Dorsolateral prefrontal cortex (tissue), 120 donors: ENCODE measurements at regions of chr15 and their contacts with region 1.

Region 1: DNA sequence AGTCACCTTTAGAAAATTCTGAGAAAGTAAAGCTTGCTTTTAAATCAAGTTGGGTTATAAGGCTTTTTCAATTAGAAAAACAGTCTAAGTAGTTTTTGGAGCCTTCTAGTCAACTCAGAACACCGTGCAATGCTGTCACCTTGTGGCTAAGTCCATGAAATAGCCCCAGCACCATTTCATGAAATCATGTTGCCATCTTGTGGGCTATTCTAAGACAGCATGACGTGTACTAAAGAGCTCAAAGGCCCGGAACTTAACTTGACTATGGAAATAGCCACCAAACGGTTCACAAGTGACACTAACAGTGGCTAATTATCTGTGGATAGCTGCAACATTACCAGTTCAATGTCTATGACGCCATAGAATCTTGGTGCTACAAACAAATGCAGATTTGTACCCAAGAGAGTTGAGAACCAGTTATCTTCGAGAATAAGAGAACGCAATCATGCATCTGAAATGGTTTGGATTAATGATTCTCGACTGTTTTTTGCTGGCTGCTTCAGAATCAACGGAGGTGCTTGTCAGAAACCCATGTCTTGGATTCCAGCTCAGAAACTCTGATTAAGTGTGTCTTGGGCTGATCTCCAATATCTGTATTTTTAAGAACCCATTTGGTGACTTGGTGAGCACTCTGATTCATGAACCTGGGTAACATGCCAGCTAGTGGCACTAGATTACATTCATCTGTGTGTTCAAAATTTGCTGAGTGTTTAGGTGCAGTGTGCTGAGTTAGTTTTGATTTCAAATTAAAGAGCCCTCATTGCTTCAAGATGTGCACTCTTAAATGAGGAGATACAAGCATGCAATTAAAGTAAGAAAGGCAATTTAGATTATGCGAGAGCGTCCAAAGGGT is 111.2 kb upstream of the MCTP2 start:
- DNase-seq: peak in 8 of 10 donors; percentile 20 to 74 (median 49)
- H3K4me3 ChIP-seq: no peak overlapping the region
- H3K27ac ChIP-seq: no peak overlapping the region
- H3K27me3 ChIP-seq: no peaks in the 10 kb centered on the region
- CTCF ChIP-seq: peak; percentile 66 to 99 (median 96)

Region 2: DNA sequence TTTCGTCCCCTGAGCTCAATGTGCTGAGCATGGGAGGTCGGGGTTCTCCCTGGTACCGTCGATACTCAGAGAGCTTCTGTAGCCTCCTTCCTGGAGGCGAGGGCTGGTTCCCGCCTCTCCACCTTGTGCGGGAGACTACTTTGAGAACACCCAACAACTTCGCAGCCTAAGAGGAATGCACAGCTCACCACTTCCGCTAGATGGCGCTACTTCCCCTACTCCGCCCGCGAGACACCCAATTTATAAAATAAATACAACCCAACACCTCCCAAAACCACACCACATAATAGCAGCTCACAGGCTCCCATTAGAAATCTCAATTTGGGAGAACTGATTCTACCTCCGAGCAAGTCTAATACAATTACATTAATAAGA is 1032.3 kb before region 1 on chr15:
- intact Hi-C with region 1: loop called (anchors 2 to 5 kb)
- DNase-seq: peak in 9 of 10 donors; percentile 45 to 82 (median 76)
- H3K4me3 ChIP-seq: peak overlapping the region; percentile 43 to 77 (median 60)
- H3K27ac ChIP-seq: peak overlapping the region in 44 of 59 donors; percentile 0 to 87 (median 78)
- H3K27me3 ChIP-seq: peaks cover 0 to 69% (median 17%) of the 10 kb centered on the region in 45 donors
- CTCF ChIP-seq: peak; percentile 79 to 97 (median 91)

Region 3: DNA sequence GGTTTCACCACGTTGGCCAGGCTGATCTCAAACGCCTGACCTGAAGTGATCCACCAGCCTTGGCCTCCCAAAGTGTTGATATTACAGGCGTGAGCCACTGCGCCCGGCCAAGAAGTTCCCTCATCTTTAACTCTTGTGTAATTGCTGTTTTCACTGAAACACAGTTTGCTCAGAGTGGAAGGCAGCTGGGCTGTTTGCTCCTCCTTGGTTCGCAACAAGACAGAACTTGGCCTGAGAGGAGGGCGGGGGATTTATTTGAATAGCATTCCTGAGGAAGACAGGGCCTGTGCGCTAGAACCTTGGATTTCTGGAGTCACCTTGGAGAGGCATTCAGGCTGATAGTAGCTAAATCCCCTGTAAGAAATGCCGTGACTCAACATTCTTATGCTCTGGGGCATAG is 115.5 kb before region 1 on chr15:
- intact Hi-C with region 1: loop called in 1 of 2 experiments (anchors 5 kb)
- DNase-seq: no peak
- H3K4me3 ChIP-seq: no peak overlapping the region
- H3K27ac ChIP-seq: no peak overlapping the region
- H3K27me3 ChIP-seq: no peaks in the 10 kb centered on the region
- CTCF ChIP-seq: no peak

Region 4: DNA sequence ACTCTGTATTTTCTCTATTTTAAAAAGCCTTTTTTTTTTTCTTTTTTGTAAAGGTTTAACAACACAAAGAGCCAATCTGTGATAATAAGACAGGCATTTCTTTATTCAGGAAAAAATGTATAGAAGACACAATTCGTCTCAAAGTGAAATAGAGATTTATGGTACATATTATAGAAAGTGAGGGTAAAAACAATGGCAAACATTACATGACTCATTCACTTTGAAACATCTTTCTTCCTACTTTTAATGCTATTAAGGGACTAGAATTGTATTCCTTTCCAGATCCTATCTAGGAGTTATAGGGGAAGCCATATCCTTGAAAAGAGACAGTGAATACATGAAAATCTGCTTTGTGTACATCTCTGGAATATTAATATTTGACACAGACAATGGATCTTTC is 25.8 kb before region 1 on chr15:
- intact Hi-C with region 1: no loop called
- DNase-seq: no peak
- H3K4me3 ChIP-seq: no peak overlapping the region
- H3K27ac ChIP-seq: no peak overlapping the region
- H3K27me3 ChIP-seq: peaks cover 0 to 3% (median 0%) of the 10 kb centered on the region in 45 donors
- CTCF ChIP-seq: no peak

Region 5: GRCh38 chr15:94306700-94307650 is 186.8 kb after region 1 on chr15:
- intact Hi-C with region 1: no loop called
- DNase-seq: no peak
- H3K4me3 ChIP-seq: no peak overlapping the region
- H3K27ac ChIP-seq: no peak overlapping the region
- H3K27me3 ChIP-seq: peaks cover 0 to 14% (median 0%) of the 10 kb centered on the region in 45 donors
- CTCF ChIP-seq: no peak